Activated CD8-positive, alpha-beta memory T cell treated with anti-CD3 and anti-CD28 coated beads, Interleukin-2, amount 10 ng/mL, durations not matched to agents 7 days and 5 days (primary cell): ENCODE measurements at regions of chr2 and their contacts with region 1.

Region 1: DNA sequence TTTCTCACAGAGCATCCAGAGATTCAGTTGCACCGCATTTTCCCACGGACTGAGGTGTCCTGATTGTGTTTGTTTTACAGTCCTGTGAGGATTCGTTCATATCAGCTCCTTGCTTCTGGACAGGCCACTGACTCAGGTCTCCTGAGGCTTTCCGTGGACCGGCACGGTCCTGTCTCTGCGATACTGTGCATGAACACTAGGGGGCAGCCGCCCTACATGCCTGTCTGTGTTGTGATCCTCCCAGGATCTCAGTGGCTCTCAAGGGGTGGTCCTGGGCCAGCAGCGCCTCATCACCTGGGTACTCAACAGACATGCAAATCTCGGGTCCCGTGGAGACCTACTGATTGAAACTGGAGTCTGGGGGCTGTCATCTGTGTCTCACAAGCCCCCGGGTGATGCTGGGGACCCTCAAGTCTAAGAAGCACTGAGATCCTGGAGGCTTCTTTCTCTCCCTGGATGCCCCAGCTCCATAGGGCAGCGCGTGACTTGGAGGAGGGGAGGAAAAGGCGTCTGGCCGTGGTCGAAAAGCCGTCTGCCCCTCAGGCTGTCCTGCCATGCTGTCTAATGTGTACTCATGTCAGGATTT is 28.9 kb downstream of the IL1R2 start:
- DNase-seq: peak; percentile 85
- ATAC-seq: peak; percentile 93
- H3K4me3 Mint-ChIP-seq: no peak overlapping the region
- H3K27ac Mint-ChIP-seq: no peak overlapping the region
- H3K4me1 Mint-ChIP-seq: peaks cover 7% of the 10 kb centered on the region
- H3K27me3 Mint-ChIP-seq: peaks cover 5% of the 10 kb centered on the region

Region 2: GRCh38 chr2:102005989-102006885 is 14.5 kb before region 1 on chr2:
- CTCF ChIA-PET with region 1: interaction called, 18 read pairs
- DNase-seq: peak; percentile 50
- ATAC-seq: peak; percentile 48
- H3K4me3 Mint-ChIP-seq: no peak overlapping the region
- H3K27ac Mint-ChIP-seq: no peak overlapping the region
- H3K4me1 Mint-ChIP-seq: peaks cover 19% of the 10 kb centered on the region
- H3K27me3 Mint-ChIP-seq: peaks cover 9% of the 10 kb centered on the region

Region 3: GRCh38 chr2:102033031-102033749 is 12.5 kb after region 1 on chr2:
- CTCF ChIA-PET with region 1: interaction called, 18 read pairs
- DNase-seq: no peak
- ATAC-seq: peak; percentile 42
- H3K4me3 Mint-ChIP-seq: no peak overlapping the region
- H3K27ac Mint-ChIP-seq: peak overlapping the region; percentile 62
- H3K4me1 Mint-ChIP-seq: peaks cover 38% of the 10 kb centered on the region
- H3K27me3 Mint-ChIP-seq: no peaks in the 10 kb centered on the region

Region 4: DNA sequence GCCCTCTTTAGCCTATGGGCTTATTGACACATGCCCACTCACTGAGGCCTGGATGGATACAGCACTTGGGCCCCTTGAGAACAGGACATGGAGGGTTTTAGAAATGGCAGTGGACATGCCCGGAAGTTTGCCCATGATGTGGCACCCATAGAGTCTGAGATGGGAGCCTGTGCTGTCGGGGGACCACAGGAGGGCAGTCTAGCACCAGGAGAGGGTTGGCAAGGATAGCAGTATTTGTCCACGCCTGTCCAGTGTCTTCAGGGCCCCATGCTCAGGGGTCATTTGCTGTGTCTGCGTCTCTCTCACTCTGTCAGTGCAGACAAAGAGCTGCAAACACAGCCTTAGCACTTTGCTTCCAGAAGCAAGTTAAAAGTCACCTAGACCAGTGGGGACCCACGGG is 214.8 kb after region 1 on chr2:
- CTCF ChIA-PET with region 1: interaction called, 57 read pairs
- DNase-seq: peak; percentile 56
- ATAC-seq: peak; percentile 41
- H3K4me3 Mint-ChIP-seq: no peak overlapping the region
- H3K27ac Mint-ChIP-seq: no peak overlapping the region
- H3K4me1 Mint-ChIP-seq: peaks cover 41% of the 10 kb centered on the region
- H3K27me3 Mint-ChIP-seq: no peaks in the 10 kb centered on the region

Region 5: GRCh38 chr2:102251042-102251848 is 230.6 kb after region 1 on chr2:
- CTCF ChIA-PET with region 1: interaction called, 11 read pairs
- DNase-seq: peak; percentile 67
- ATAC-seq: peak; percentile 75
- H3K4me3 Mint-ChIP-seq: peak overlapping the region; percentile 75
- H3K27ac Mint-ChIP-seq: peak overlapping the region; percentile 32
- H3K4me1 Mint-ChIP-seq: peaks cover 40% of the 10 kb centered on the region
- H3K27me3 Mint-ChIP-seq: peaks cover 21% of the 10 kb centered on the region